ENCODE measurements at regions of chr2 and their contacts with region 1.

Region 1: GRCh38 chr2:178450774-178451525 is at the starts of genes PJVK and PRKRA:
- DNase-seq: peak; percentile 98 to 99 (median 99)
- ATAC-seq: peak; percentile 99
- H3K4me3 ChIP-seq: peak within 1 kb of the TSS; percentile 62
- H3K27ac ChIP-seq: peak within 1 kb of the TSS; percentile 97
- H3K4me1 ChIP-seq: peaks cover 9% of the 10 kb centered on the region
- H3K27me3 ChIP-seq: no peaks in the 10 kb centered on the region
- total RNA-seq, gene PJVK: 1.9 to 2.4 (median 2.0) TPM
- total RNA-seq, gene PRKRA: 36.6 to 43.9 (median 37.8) TPM

Region 2: DNA sequence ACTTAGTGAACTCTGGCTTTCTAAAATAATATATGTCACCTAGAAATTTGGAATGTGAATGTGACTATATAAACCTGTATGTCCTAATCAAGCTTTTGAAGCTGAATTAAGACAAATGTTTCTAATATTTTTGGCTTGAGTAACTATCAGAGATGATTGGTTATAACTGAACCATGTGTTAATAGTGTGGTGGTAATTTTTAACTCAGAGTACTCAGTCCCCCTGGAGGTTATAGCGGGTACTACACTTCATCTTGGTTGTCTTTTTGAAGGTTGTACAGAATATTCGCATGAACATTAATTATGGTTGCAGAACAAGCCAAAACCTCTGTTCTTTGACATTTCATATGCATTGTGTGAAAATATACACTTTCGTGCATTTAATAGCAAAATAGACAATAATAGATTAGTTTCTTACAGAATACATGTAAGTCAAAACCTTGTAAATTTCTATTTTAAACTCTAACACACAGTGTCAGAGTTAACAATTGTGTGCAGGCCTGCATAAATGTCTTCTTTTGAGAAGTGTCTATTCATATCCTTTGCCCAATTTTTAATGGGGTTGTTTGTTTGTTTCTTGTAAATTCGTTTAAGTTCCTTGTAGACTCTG is 170.6 kb before region 1 on chr2:
- intact Hi-C with region 1: no loop called
- DNase-seq: no peak
- ATAC-seq: peak; percentile 58 to 60
- H3K4me3 ChIP-seq: no peak overlapping the region
- H3K27ac ChIP-seq: no peak overlapping the region
- H3K4me1 ChIP-seq: no peaks in the 10 kb centered on the region
- H3K27me3 ChIP-seq: no peaks in the 10 kb centered on the region

Region 3: GRCh38 chr2:178478439-178479274 is 27.7 kb after region 1 on chr2 and contains the start of gene FKBP7:
- intact Hi-C with region 1: loop called in 1 of 4 experiments (anchors 2 kb)
- DNase-seq: peak; percentile 90 to 96 (median 95)
- ATAC-seq: peak; percentile 90 to 91
- H3K4me3 ChIP-seq: peak within 1 kb of the TSS; percentile 92
- H3K27ac ChIP-seq: peak within 1 kb of the TSS; percentile 99
- H3K4me1 ChIP-seq: peaks cover 9% of the 10 kb centered on the region
- H3K27me3 ChIP-seq: no peaks in the 10 kb centered on the region
- total RNA-seq, gene FKBP7: 10.7 to 15.6 (median 12.8) TPM